ENCODE measurements at regions of chr20 and their contacts with region 1.

Region 1: DNA sequence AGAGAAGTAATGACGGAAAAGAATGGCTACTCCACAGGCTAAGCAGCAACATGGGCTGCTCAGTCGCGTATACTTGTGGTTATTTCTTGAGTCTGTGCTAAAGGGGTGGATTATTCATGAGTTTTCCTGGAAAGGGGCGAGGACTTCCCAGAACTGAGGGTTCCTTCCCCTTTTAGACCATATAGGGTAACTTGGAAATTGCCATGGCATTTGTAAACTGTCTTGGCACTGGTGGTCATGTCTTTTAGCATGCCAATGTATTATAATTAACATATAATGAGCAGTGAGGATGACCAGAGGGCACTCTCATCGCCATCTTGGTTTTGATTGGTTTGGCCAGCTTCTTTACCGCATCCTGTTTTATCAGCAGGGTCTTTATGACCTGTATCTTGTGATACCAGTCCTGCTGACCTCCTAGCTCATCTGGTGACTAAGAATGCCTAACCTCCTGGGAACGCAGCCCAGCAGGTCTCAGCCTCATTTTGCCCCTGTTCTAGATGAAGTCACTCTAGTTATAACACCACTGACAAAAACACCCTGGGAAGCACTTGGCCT is 11.4 kb downstream of the LBP start:
- DNase-seq: no peak
- H3K4me3 ChIP-seq: no peak overlapping the region
- H3K27ac ChIP-seq: no peak overlapping the region
- H3K4me1 ChIP-seq: peaks cover 2 to 23% (median 14%) of the 10 kb centered on the region in 4 experiments
- H3K27me3 ChIP-seq: no peaks in the 10 kb centered on the region
- CTCF ChIP-seq: no peak
- EP300 ChIP-seq: no peak
- POLR2A ChIP-seq: no peak
- RAD21 ChIP-seq: no peak

Region 2: DNA sequence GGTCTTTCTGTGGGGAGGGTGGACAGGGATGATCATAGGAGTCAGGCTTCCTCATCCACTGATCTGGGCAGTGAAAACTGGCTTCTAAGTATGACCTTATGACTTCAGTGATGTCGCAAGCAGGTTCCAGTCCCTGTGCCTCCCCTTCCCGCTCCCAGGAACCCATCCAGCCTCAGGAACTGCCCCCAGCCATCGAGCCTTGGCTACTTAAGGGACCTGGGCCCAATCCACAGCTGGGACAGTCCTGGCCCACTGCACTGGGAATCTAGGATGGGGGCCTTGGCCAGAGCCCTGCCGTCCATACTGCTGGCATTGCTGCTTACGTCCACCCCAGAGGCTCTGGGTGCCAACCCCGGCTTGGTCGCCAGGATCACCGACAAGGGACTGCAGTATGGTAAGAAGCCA is 11.5 kb before region 1 on chr20 and contains the start of gene LBP:
- CTCF ChIA-PET with region 1: interaction called, 390 read pairs
- POLR2A ChIA-PET with region 1: interaction called, 11 read pairs
- DNase-seq: no peak
- H3K4me3 ChIP-seq: no peak within 1 kb of the TSS
- H3K27ac ChIP-seq: no peak within 1 kb of the TSS
- H3K4me1 ChIP-seq: peaks cover 10 to 20% (median 13%) of the 10 kb centered on the region in 4 experiments
- H3K27me3 ChIP-seq: no peaks in the 10 kb centered on the region
- CTCF ChIP-seq: no peak
- EP300 ChIP-seq: no peak
- POLR2A ChIP-seq: no peak
- RAD21 ChIP-seq: no peak
- total RNA-seq, gene LBP: 0.48 and 0.63 TPM in 2 replicates

Region 3: DNA sequence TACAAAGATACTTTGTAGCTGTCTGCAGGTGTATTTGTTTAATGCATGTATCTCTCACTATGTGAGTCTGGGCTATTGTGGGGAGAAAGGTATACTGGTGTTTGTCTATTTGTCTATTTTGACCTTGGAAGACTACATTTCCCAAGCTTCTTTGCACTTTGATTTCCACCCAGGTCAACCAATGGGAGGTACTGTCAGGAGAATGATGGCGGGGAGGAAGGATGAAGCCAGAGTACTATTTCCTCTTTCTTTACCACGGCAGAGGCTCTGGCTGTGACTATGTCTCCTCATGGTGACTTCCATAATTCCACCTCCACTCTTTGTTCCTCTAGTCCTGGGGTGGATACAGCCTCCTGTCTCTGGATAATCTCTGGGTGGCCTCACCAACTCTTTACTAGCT is 11.7 kb after region 1 on chr20:
- CTCF ChIA-PET with region 1: interaction called, 48 read pairs
- POLR2A ChIA-PET with region 1: interaction called, 3 read pairs
- DNase-seq: no peak
- H3K4me3 ChIP-seq: peak overlapping the region in 1 of 4 experiments; percentile 33; a peak in 1 of 8 replicates
- H3K27ac ChIP-seq: no peak overlapping the region
- H3K4me1 ChIP-seq: peaks cover 0 to 3% (median 0%) of the 10 kb centered on the region in 4 experiments; a peak in 1 of 7 replicates
- H3K27me3 ChIP-seq: no peaks in the 10 kb centered on the region; a peak in 1 of 7 replicates
- CTCF ChIP-seq: no peak
- EP300 ChIP-seq: no peak
- POLR2A ChIP-seq: no peak
- RAD21 ChIP-seq: no peak

Region 4: GRCh38 chr20:38406476-38406875 is 48.7 kb after region 1 on chr20:
- CTCF ChIA-PET with region 1: interaction called, 27 read pairs
- POLR2A ChIA-PET with region 1: no interaction called
- DNase-seq: no peak
- H3K4me3 ChIP-seq: no peak overlapping the region
- H3K27ac ChIP-seq: no peak overlapping the region
- H3K4me1 ChIP-seq: peaks cover 0 to 3% (median 0%) of the 10 kb centered on the region in 4 experiments; a peak in 1 of 7 replicates
- H3K27me3 ChIP-seq: no peaks in the 10 kb centered on the region
- CTCF ChIP-seq: no peak
- EP300 ChIP-seq: no peak
- POLR2A ChIP-seq: no peak
- RAD21 ChIP-seq: no peak

Region 5: GRCh38 chr20:38412877-38413577 is 55.3 kb after region 1 on chr20:
- CTCF ChIA-PET with region 1: interaction called, 18 read pairs
- POLR2A ChIA-PET with region 1: interaction called, 4 read pairs
- DNase-seq: no peak
- H3K4me3 ChIP-seq: no peak overlapping the region
- H3K27ac ChIP-seq: no peak overlapping the region
- H3K4me1 ChIP-seq: peaks cover 0 to 5% (median 2%) of the 10 kb centered on the region in 4 experiments; a peak in 5 of 7 replicates
- H3K27me3 ChIP-seq: no peaks in the 10 kb centered on the region
- CTCF ChIP-seq: no peak
- EP300 ChIP-seq: no peak
- POLR2A ChIP-seq: no peak
- RAD21 ChIP-seq: no peak

Region 6: DNA sequence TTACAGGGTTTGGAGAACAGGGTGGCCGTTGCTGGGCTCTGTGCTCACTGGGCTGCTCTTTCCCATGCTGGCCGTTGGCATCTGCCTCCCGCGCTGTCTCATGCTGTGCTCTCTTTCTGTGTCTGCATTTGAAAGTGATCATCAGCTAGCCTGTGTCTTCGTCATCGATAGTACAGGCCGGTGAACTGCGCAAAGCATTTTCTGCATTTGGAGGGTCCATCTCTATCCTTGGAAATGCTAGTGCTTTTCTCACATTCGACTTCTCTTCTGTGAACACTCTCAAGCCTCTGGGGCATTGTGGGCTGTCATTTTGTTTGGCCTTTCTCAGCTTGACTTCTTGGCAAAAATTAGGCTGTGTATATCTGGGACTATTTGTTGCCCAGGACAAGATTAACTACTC is 84.2 kb after region 1 on chr20:
- CTCF ChIA-PET with region 1: no interaction called
- POLR2A ChIA-PET with region 1: no interaction called
- DNase-seq: no peak
- H3K4me3 ChIP-seq: no peak overlapping the region
- H3K27ac ChIP-seq: no peak overlapping the region
- H3K4me1 ChIP-seq: peaks cover 0 to 3% (median 0%) of the 10 kb centered on the region in 4 experiments; a peak in 1 of 7 replicates
- H3K27me3 ChIP-seq: no peaks in the 10 kb centered on the region; a peak in 2 of 7 replicates
- CTCF ChIP-seq: no peak
- EP300 ChIP-seq: no peak
- POLR2A ChIP-seq: no peak
- RAD21 ChIP-seq: no peak